HepG2 (cell line): ENCODE measurements at regions of chr12 and their contacts with region 1.

Region 1: GRCh38 chr12:6423267-6424007 is 21.3 kb upstream of the CD27 start:
- DNase-seq: peak; percentile 81
- ATAC-seq: peak; percentile 92
- H3K4me3 ChIP-seq: peak overlapping the region in 1 of 3 experiments; percentile 12; a peak in 1 of 6 replicates
- H3K27ac ChIP-seq: no peak overlapping the region
- H3K4me1 ChIP-seq: peaks cover 63% of the 10 kb centered on the region
- H3K27me3 ChIP-seq: peaks cover 2 to 12% of the 10 kb centered on the region in 2 experiments; a peak in 2 of 5 replicates
- CTCF ChIP-seq: peak; percentile 95
- EP300 ChIP-seq: no peak
- POLR2A ChIP-seq: no peak
- RAD21 ChIP-seq: peak; percentile 84

Region 2: GRCh38 chr12:6250343-6250742 is 173.1 kb before region 1 on chr12:
- CTCF ChIA-PET with region 1: no interaction called
- POLR2A ChIA-PET with region 1: no interaction called
- in situ Hi-C with region 1: no loop called
- intact Hi-C with region 1: no loop called
- DNase-seq: no peak
- ATAC-seq: no peak; the same call in 2 of the 3 replicates
- H3K4me3 ChIP-seq: no peak overlapping the region
- H3K27ac ChIP-seq: no peak overlapping the region
- H3K4me1 ChIP-seq: no peaks in the 10 kb centered on the region
- H3K27me3 ChIP-seq: peaks cover 3 to 44% of the 10 kb centered on the region in 2 experiments; a peak in 4 of 5 replicates
- CTCF ChIP-seq: no peak
- EP300 ChIP-seq: no peak
- POLR2A ChIP-seq: no peak
- RAD21 ChIP-seq: no peak

Region 3: DNA sequence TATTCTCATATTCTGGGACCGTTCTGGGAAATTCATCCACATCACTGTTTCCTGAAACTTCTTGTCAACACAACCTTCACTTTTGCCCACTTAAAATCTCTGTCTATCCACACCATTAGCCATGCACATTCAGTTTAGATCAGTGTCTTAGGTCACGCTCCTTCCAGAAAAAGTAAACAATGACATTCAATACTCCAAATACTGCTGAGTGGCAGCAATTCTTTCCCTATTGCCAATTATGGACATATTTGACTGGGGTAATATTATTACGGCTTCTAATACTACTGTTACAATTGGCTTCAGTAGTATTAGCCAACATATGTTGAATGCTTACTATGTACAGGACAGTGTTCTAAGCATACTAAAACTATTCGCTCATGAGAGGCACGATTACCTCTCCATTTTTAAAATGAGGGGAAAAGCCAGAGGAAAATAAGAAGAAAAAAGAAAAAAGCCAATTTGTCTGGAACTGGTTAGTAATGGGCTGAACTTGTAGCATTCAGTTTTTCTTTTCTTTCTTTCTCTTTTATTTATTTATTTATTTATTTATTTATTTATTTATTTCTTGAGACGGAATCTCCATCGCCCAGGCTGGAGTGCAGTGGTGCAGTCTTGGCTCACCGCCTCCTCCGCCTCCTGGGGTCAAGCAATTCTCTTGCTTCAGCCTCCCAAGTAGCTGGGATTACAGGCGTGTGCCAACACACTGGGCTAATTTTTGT is 16.0 kb before region 1 on chr12:
- CTCF ChIA-PET with region 1: no interaction called
- POLR2A ChIA-PET with region 1: no interaction called
- in situ Hi-C with region 1: no loop called
- intact Hi-C with region 1: no loop called
- DNase-seq: no peak
- ATAC-seq: no peak
- H3K4me3 ChIP-seq: no peak overlapping the region
- H3K27ac ChIP-seq: no peak overlapping the region
- H3K4me1 ChIP-seq: no peaks in the 10 kb centered on the region; the same call in 1 of the 2 replicates
- H3K27me3 ChIP-seq: no peaks in the 10 kb centered on the region
- CTCF ChIP-seq: no peak
- EP300 ChIP-seq: no peak
- POLR2A ChIP-seq: no peak
- RAD21 ChIP-seq: no peak

Region 4: GRCh38 chr12:6461401-6462233 is 38.2 kb after region 1 on chr12:
- CTCF ChIA-PET with region 1: interaction called, 29 read pairs
- POLR2A ChIA-PET with region 1: interaction called, 5 read pairs
- in situ Hi-C with region 1: loop called (anchors 5 kb)
- intact Hi-C with region 1: loop called (anchors 1 kb)
- DNase-seq: no peak
- ATAC-seq: no peak
- H3K4me3 ChIP-seq: no peak overlapping the region
- H3K27ac ChIP-seq: no peak overlapping the region
- H3K4me1 ChIP-seq: 0 out of 2 replicates have a peak, but pooled peaks cover 5% of the 10 kb centered on the region
- H3K27me3 ChIP-seq: no peaks in the 10 kb centered on the region
- CTCF ChIP-seq: no peak
- EP300 ChIP-seq: no peak
- POLR2A ChIP-seq: no peak
- RAD21 ChIP-seq: no peak

Region 5: DNA sequence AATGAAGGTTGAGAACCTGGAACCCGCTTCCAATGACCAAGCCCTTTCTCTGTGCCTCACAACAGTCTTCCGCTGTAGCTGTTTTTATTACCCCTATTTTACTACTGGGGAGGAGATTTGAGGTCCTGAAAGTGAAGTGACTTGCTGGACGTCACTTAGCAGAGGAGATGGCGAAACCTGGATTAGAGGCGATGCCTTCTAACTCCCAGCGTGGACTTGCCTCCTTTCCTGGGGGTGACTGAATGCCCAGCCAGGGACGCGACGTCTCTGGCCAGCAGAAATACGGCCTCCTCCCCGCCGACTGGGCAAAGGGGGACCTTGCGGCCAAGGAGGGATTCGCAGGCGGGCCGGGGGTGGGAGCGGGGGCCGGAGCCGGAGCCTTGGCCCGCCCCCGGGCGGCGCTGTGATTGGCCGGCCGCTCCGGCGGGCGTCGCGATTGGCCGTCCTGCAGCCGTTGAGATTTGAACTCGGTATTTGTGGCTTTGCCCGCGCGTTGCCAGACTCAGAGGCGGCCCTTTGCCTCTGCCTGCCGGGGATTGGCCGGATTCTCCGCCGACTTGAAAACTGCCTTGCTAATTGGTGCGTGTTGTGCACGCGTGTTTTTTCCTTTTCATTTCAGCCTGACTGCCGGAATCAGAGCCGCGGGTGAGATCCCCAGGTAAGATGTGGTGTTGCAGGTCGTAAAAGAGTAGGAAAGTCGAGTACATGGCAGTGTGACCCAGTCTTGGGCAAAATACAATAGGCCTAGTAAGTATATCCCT is 70.2 kb after region 1 on chr12 and contains the start of gene NCAPD2:
- CTCF ChIA-PET with region 1: no interaction called
- POLR2A ChIA-PET with region 1: no interaction called
- in situ Hi-C with region 1: no loop called
- intact Hi-C with region 1: loop called (anchors 1 kb)
- DNase-seq: peak; percentile 94
- ATAC-seq: peak; percentile 94
- H3K4me3 ChIP-seq: peak within 1 kb of the TSS; percentile 80 to 83 (median 81)
- H3K27ac ChIP-seq: peak within 1 kb of the TSS; percentile 98
- H3K4me1 ChIP-seq: peaks cover 38% of the 10 kb centered on the region
- H3K27me3 ChIP-seq: no peaks in the 10 kb centered on the region; a peak in 1 of 5 replicates
- CTCF ChIP-seq: no peak; the same call in 1 of the 2 replicates
- EP300 ChIP-seq: no peak
- POLR2A ChIP-seq: peak; percentile 5 to 68; a peak in 3 of 4 replicates
- RAD21 ChIP-seq: no peak
- total RNA-seq, gene NCAPD2: 65.6 and 100 TPM in 2 replicates

Region 6: DNA sequence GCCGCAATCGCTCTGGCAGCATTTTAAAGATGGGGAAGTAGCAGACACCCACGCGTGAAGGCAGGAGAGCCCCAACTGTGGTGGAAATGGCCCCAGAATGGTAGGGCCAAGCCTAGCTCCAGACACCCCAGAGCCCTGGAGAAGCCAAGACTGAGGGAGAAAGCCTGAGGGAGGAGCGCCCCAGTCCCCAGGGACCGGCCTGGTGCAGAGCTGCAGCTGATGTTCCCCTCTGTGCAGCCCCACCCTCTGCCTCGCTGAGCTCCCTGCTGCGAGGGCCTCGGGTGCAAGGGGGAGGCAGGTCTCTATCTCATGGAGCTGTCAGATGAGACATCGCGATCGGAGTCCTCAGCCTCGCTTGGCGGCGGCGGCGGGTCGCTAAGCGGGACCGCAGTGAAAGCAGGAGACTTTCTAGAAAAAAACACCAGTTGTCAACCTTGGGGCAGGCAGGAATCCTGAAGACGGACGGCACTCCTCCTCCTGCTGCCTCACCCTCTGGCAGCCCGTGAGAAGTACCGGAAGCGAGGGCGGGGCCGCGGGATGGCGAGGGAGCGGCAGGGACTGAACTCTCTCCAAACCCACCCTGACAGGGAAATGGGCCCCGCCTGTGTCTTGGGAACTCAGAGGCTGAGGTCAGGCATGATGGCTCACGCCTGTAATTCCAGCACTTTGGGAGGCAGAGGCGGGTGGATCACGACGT is 116.9 kb after region 1 on chr12:
- CTCF ChIA-PET with region 1: no interaction called
- POLR2A ChIA-PET with region 1: interaction called, 4 read pairs
- in situ Hi-C with region 1: loop called (anchors 10 kb)
- intact Hi-C with region 1: loop called (anchors 1 kb)
- DNase-seq: no peak
- ATAC-seq: peak; percentile 2
- H3K4me3 ChIP-seq: no peak overlapping the region
- H3K27ac ChIP-seq: no peak overlapping the region
- H3K4me1 ChIP-seq: peaks cover 53% of the 10 kb centered on the region
- H3K27me3 ChIP-seq: no peaks in the 10 kb centered on the region; a peak in 1 of 5 replicates
- CTCF ChIP-seq: no peak
- EP300 ChIP-seq: no peak
- POLR2A ChIP-seq: no peak
- RAD21 ChIP-seq: no peak

Region 7: DNA sequence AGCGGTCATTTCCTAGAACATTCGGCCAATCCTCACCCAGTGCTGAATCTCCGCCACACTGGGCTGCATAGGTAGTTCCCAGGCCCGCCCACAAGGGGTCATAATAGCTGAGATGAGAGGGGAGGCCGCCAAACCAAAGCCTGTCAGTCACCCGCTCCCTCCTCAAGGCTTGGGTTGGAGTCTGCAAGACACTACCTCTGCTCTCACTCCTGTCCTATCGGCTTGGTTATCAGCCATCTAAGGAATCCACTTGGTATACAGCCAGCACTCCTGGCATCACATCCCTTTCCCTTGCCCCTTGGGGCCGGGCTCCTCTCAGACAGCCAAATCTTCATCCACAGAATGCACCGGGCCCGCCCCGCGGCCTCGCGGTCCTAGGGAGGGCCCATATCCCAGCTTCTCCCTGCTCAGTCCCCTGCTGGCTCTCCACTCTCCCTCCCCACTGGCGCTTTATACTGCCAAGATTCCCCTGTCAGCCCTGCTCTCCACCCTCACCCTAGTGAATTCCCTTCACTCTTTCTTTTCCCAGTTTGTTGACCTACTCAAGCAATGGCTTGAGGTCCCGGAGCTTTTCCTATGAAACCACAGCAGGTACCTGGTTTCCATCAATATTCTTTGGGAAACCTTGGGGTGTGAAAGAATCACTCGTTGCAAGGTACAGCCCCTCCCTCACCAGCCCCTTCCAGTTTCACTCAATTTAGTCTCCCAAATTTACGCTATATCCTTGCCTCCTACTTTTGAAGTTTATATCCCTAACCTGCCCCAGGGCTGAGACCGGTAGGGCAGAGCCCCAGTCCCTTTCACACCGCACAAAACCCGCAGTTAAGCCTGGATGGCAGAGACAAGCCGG is 131.0 kb after region 1 on chr12:
- CTCF ChIA-PET with region 1: interaction called, 3 read pairs
- POLR2A ChIA-PET with region 1: no interaction called
- in situ Hi-C with region 1: no loop called
- intact Hi-C with region 1: loop called (anchors 5 kb)
- DNase-seq: peak; percentile 77
- ATAC-seq: peak; percentile 72
- H3K4me3 ChIP-seq: peak overlapping the region; percentile 77 to 95 (median 92)
- H3K27ac ChIP-seq: peak overlapping the region; percentile 42
- H3K4me1 ChIP-seq: peaks cover 43% of the 10 kb centered on the region
- H3K27me3 ChIP-seq: no peaks in the 10 kb centered on the region; a peak in 1 of 5 replicates
- CTCF ChIP-seq: peak; percentile 86
- EP300 ChIP-seq: no peak
- POLR2A ChIP-seq: 0 out of 4 replicates have a peak, but pooled peaks of 1 of the 2 experiments have one; percentile 25
- RAD21 ChIP-seq: peak; percentile 38; the same call in 1 of the 2 replicates